H1 (cell line): ENCODE measurements at regions of chr1 and their contacts with region 1.

Region 1: GRCh38 chr1:110305900-110306420 is 33.2 kb upstream of the RBM15 start:
- DNase-seq: no peak
- H3K4me3 ChIP-seq: no peak overlapping the region
- H3K27ac ChIP-seq: no peak overlapping the region
- H3K4me1 ChIP-seq: no peaks in the 10 kb centered on the region
- H3K27me3 ChIP-seq: no peaks in the 10 kb centered on the region; a peak in 2 of 7 replicates
- CTCF ChIP-seq: no peak
- EP300 ChIP-seq: no peak
- POLR2A ChIP-seq: no peak
- RAD21 ChIP-seq: no peak

Region 2: DNA sequence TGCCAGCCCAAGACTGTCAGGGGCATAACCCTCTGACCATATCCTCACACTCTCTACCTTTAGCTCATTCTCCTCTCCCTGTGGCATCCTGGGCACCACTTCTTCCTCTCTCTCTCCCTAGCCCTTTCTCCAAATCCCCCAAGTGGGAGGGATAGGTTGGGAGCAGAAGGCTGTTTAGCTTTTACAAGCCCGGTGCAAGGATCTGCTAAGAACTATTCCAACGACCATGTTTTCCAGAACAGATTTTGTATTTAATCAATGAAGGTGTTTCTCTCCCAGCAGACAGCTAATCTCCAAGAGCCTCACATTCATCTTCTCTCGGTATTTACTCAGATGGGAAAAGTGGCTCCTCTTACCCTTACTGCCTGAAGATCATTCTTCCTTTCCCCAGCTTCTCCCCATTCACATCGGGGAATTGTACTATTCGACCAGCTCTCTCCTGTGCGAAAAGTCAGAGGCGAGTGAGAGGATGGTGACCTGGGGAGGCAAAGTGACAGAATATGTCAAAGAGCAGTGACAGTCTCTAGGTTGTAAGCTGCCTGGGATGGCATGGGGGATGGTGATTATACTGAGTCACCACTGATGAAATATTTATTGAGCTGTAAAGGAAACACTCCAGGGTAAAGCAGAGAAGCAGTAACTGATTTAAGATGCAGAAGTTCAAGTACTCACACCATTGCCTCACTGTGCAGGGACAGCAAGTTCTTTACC is 13.8 kb before region 1 on chr1:
- CTCF ChIA-PET with region 1: interaction called, 13 read pairs
- POLR2A ChIA-PET with region 1: interaction called, 3 read pairs
- DNase-seq: no peak
- H3K4me3 ChIP-seq: no peak overlapping the region
- H3K27ac ChIP-seq: no peak overlapping the region
- H3K4me1 ChIP-seq: no peaks in the 10 kb centered on the region; a peak in 1 of 7 replicates
- H3K27me3 ChIP-seq: no peaks in the 10 kb centered on the region
- CTCF ChIP-seq: no peak
- EP300 ChIP-seq: no peak
- POLR2A ChIP-seq: no peak
- RAD21 ChIP-seq: no peak

Region 3: DNA sequence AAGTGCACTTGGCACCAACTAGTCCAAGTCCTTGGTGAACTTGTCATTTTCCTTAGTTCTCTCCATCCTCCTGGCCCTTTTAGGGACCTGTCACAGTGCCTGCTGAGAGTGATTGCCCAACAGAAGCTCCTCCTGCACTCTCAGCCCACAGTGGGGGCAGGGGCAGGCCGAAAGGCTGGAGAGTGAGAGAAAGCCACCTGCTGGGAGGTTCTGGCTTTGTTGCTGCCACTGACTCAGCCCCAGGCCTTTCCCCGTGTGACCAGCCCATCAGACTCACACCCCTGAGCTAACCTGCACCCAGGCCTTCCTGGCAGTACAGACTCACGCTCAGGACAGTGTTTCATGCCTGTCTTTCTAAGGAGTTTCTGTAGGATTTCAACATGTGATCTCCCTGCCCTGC is 127.8 kb after region 1 on chr1:
- CTCF ChIA-PET with region 1: no interaction called
- POLR2A ChIA-PET with region 1: no interaction called
- DNase-seq: peak; percentile 38 to 66
- H3K4me3 ChIP-seq: no peak overlapping the region
- H3K27ac ChIP-seq: no peak overlapping the region
- H3K4me1 ChIP-seq: peaks cover 3 to 9% (median 7%) of the 10 kb centered on the region in 4 experiments; a peak in 6 of 7 replicates
- H3K27me3 ChIP-seq: no peaks in the 10 kb centered on the region
- CTCF ChIP-seq: no peak
- EP300 ChIP-seq: no peak
- POLR2A ChIP-seq: no peak
- RAD21 ChIP-seq: peak in 1 of 2 experiments; percentile 25; a peak in 1 of 4 replicates